ENCODE measurements at regions of chr2 and their contacts with region 1.

Region 1: GRCh38 chr2:207625018-207625907 is at the start of gene METTL21A:
- DNase-seq: peak; percentile 95
- H3K4me3 Mint-ChIP-seq: peak within 1 kb of the TSS; percentile 88
- H3K27ac Mint-ChIP-seq: peak within 1 kb of the TSS; percentile 89
- H3K4me1 Mint-ChIP-seq: peaks cover 56% of the 10 kb centered on the region
- H3K27me3 Mint-ChIP-seq: no peaks in the 10 kb centered on the region
- total RNA-seq, gene METTL21A: 18.6 to 19.0 TPM

Region 2: GRCh38 chr2:206765242-206766056 is 859.8 kb before region 1 on chr2 and contains the starts of genes FASTKD2 and MDH1B:
- CTCF ChIA-PET with region 1: no interaction called
- intact Hi-C with region 1: loop called (anchors 1 kb)
- DNase-seq: peak; percentile 91
- H3K4me3 Mint-ChIP-seq: peak within 1 kb of the TSS; percentile 89
- H3K27ac Mint-ChIP-seq: peak within 1 kb of the TSS; percentile 95
- H3K4me1 Mint-ChIP-seq: peaks cover 35% of the 10 kb centered on the region
- H3K27me3 Mint-ChIP-seq: no peaks in the 10 kb centered on the region
- total RNA-seq, gene FASTKD2: 21.4 to 22.8 TPM
- total RNA-seq, gene MDH1B: 0.86 TPM

Region 3: DNA sequence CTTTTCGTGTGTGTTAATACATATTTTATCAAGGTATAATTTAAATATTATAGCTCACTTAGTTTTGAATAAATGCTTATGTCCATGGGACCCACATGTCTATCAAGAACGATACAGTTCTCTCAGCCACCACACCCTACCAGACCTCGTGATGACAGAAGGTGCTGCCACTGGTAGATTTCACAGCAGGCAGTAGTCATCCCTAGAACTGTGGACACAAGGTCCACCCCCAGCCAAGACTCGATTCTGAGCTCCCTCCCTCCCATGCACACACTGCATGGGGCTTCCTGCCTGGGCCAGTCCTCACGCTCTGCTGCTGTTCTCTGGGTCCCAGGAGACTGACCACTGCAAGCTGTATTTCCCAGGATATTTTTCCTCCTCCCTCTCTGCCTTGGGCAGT is 122.0 kb before region 1 on chr2:
- CTCF ChIA-PET with region 1: interaction called, 5 read pairs
- intact Hi-C with region 1: loop called (anchors 1 kb)
- DNase-seq: no peak
- H3K4me3 Mint-ChIP-seq: no peak overlapping the region
- H3K27ac Mint-ChIP-seq: no peak overlapping the region
- H3K4me1 Mint-ChIP-seq: peaks cover 47% of the 10 kb centered on the region
- H3K27me3 Mint-ChIP-seq: no peaks in the 10 kb centered on the region

Region 4: GRCh38 chr2:207710814-207711740 is 85.8 kb after region 1 on chr2 and contains the start of gene CCNYL1:
- CTCF ChIA-PET with region 1: interaction called, 6 read pairs
- intact Hi-C with region 1: loop called (anchors 1 kb)
- DNase-seq: peak; percentile 98
- H3K4me3 Mint-ChIP-seq: peak within 1 kb of the TSS; percentile 88
- H3K27ac Mint-ChIP-seq: peak within 1 kb of the TSS; percentile 56
- H3K4me1 Mint-ChIP-seq: peaks cover 26% of the 10 kb centered on the region
- H3K27me3 Mint-ChIP-seq: no peaks in the 10 kb centered on the region
- total RNA-seq, gene CCNYL1: 2.5 to 2.7 TPM

Region 5: DNA sequence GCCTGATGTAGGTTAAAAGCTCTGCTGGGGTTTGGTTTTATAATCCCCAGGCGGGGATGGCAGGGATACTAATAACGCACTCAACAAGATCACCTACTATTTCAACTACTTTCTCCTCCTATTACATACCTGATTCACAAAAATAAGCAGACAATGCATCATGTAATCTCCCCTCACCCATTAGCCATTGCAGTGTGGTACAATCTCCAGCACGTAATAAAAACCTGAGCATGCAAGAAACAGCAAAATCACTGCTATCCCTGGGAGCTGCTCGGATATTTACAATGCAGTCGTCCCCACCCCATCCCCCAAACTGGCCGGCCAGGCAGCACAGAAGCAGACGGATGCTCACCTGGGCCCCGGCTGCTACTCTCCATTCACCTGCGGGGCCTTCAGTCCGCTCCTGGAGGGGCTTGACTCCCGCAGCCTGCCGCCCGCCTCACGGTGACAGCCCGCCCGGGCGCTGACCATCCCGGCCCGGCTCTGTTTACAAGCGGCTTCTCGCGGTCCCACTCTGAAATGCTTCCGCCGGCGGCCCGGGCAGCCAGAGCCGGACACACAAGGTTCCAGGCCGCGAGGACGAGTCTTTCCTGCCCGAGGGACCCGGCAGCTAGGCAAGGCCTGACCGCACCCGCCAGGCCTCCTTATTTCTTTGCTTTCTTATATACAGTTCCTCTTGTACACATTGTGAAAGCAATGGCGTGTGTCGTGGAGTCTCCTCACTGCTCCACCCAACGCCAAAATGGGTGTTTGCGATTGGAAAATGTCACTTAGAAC is 400.0 kb after region 1 on chr2 and contains the start of gene PLEKHM3:
- CTCF ChIA-PET with region 1: no interaction called
- intact Hi-C with region 1: loop called (anchors 1 kb)
- DNase-seq: peak; percentile 81
- H3K4me3 Mint-ChIP-seq: peak within 1 kb of the TSS; percentile 93
- H3K27ac Mint-ChIP-seq: peak within 1 kb of the TSS; percentile 88
- H3K4me1 Mint-ChIP-seq: peaks cover 14% of the 10 kb centered on the region
- H3K27me3 Mint-ChIP-seq: no peaks in the 10 kb centered on the region
- total RNA-seq, gene PLEKHM3: 6.5 to 7.0 TPM

Region 6: DNA sequence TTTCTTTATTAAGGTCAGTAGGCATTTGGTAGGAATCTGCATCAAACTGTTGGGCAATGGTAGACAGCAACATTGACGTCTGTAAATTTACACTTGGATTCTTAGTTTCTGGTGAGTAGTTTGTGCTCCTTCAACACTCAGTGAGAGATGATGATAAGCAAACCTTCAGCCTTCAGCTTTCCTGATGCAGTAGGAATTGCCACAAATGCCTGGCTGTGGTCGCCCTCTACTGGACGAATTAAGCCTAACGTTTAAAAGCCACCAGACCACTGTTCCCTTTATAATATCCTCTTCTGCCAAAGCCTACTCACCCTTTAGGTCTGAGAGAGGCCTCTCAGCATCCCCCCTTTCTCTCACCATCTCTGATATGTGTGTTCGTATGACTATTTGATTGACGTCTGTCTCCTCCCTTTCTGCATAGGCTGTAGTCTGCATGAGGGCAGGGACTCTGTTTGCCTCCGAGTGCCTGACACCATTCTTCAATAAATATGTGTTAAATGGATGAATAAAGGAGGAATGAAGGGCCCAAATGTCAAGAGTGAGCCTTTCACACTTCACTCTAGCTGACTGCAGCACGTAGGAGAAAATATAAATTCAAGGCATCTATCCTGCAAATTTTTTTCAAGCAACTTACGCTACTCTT is 447.1 kb after region 1 on chr2:
- CTCF ChIA-PET with region 1: interaction called, 3 read pairs
- intact Hi-C with region 1: loop called (anchors 1 kb)
- DNase-seq: peak; percentile 76
- H3K4me3 Mint-ChIP-seq: no peak overlapping the region
- H3K27ac Mint-ChIP-seq: no peak overlapping the region
- H3K4me1 Mint-ChIP-seq: no peaks in the 10 kb centered on the region
- H3K27me3 Mint-ChIP-seq: peaks cover under 1% of the 10 kb centered on the region